Dendritic cell treated with granulocyte-macrophage colony-stimulating factor and Interleukin-4, amounts not matched to agents 40 ng/mL and 50 ng/mL, for 4 days (primary cell): ENCODE measurements at regions of chr9 and their contacts with region 1.

Region 1: GRCh38 chr9:27377147-27377807 is 80.3 kb upstream of the EQTN start:
- H3K4me3 Mint-ChIP-seq: no peak overlapping the region
- H3K27ac Mint-ChIP-seq: peak overlapping the region; percentile 50
- H3K4me1 Mint-ChIP-seq: peaks cover 71% of the 10 kb centered on the region
- H3K27me3 Mint-ChIP-seq: no peaks in the 10 kb centered on the region

Region 2: GRCh38 chr9:27436234-27436633 is 59.0 kb after region 1 on chr9:
- intact Hi-C with region 1: loop called (anchors 10 kb)
- H3K4me3 Mint-ChIP-seq: no peak overlapping the region
- H3K27ac Mint-ChIP-seq: peak overlapping the region; percentile 85
- H3K4me1 Mint-ChIP-seq: peaks cover 88% of the 10 kb centered on the region
- H3K27me3 Mint-ChIP-seq: no peaks in the 10 kb centered on the region

Region 3: GRCh38 chr9:27703216-27703980 is 326.1 kb after region 1 on chr9:
- intact Hi-C with region 1: no loop called
- H3K4me3 Mint-ChIP-seq: no peak overlapping the region
- H3K27ac Mint-ChIP-seq: peak overlapping the region; percentile 41
- H3K4me1 Mint-ChIP-seq: peaks cover 30% of the 10 kb centered on the region
- H3K27me3 Mint-ChIP-seq: no peaks in the 10 kb centered on the region